ENCODE measurements at regions of chr1 and their contacts with region 1.

Region 1: DNA sequence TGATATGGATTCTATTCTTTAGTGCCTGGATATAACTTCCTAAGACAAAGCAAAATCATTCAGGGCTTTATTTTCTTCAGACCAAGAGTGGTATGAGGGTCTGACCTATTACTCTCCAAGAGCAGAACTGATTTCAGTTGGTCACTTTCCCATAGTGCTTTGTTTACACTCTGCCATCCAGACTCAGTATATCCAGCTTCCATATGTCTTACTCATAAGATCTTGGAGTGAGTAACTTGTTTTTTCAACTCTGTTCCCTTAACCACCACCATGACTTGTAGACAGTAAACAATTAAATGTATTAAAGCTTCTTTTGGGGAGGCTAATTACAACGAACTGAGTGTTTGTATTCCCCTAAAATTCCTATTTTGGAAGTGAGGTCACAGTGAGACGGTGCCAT is 83.4 kb downstream of the USP24 start:
- DNase-seq: no peak
- ATAC-seq: no peak
- H3K4me3 ChIP-seq: no peak overlapping the region
- H3K27ac ChIP-seq: no peak overlapping the region
- H3K4me1 ChIP-seq: peaks cover 0 to 24% (median 5%) of the 10 kb centered on the region in 9 donors
- H3K27me3 ChIP-seq: no peaks in the 10 kb centered on the region
- CTCF ChIP-seq: no peak

Region 2: GRCh38 chr1:55064071-55064581 is 67.7 kb before region 1 on chr1:
- intact Hi-C with region 1: no loop called
- DNase-seq: no peak
- ATAC-seq: peak in 6 of 8 donors; percentile 5 to 48 (median 32)
- H3K4me3 ChIP-seq: no peak overlapping the region
- H3K27ac ChIP-seq: peak overlapping the region in 9 of 10 donors; percentile 9 to 83 (median 72)
- H3K4me1 ChIP-seq: peaks cover 4 to 46% (median 35%) of the 10 kb centered on the region in 9 donors
- H3K27me3 ChIP-seq: no peaks in the 10 kb centered on the region
- CTCF ChIP-seq: peak in 1 of 9 donors; percentile 7

Region 3: DNA sequence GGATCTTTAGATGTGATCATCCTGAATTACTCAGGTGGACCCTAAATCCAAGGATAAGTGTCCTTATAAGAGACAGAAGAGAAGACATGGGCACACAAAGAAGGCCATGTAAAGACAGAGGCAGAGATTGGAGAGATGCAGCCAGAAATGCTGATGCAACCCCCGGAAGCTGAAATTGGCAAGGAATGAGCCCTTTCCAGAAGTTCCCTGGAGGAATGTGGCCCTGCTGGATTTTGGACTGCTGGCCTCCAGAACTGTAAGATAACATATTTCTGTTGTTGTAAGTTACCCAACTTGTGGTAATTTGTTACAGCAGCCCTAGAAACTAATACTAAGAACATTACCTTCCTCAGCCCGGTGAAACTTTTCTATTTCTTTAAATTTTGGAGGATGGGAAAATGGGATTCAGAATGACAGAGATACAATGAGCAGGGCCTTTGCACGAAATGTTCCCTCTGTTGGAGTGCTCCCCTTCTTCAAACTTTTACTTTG is 1458.8 kb after region 1 on chr1:
- intact Hi-C with region 1: loop called in 4 of 10 experiments (anchors 10 kb)
- DNase-seq: no peak
- ATAC-seq: no peak
- H3K4me3 ChIP-seq: no peak overlapping the region
- H3K27ac ChIP-seq: no peak overlapping the region
- H3K4me1 ChIP-seq: no peaks in the 10 kb centered on the region
- H3K27me3 ChIP-seq: no peaks in the 10 kb centered on the region
- CTCF ChIP-seq: no peak